AG04450 (cell line): ENCODE measurements at regions of chr3 and their contacts with region 1.

Region 1: DNA sequence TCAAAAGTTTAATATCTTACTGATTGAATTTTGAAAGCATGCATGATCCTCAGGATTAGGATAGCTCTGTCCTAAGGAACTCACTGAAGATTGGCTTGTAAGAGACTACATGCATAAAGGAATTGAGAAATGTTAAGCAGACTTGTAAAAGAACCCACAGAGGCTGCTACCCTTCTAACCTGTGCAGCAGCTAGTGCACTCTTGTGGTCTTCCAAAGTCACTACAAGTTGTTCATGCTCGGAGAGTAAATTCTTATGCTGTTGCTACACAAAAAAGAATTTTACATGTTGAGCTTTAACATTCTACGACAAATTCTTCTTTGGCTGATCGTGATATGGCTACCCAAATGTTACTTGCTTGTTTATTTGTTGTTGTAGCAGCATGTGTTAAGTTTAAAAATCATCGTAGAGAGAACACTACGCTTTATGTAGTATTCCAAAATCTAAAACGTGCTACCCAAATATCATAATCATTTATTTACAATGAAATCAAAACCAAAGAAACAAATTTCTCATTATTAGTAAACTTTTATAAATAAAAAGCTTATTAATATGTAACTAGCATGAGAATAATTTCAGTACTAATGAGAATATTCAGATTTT is 55.0 kb downstream of the GOLIM4 start:
- DNase-seq: peak; percentile 43
- H3K4me3 ChIP-seq: no peak overlapping the region
- H3K27ac ChIP-seq: no peak overlapping the region
- H3K27me3 ChIP-seq: no peaks in the 10 kb centered on the region
- CTCF ChIP-seq: peak; percentile 84

Region 2: GRCh38 chr3:167521006-167521355 is 519.7 kb before region 1 on chr3:
- CTCF ChIA-PET with region 1: no interaction called
- POLR2A ChIA-PET with region 1: no interaction called
- DNase-seq: no peak
- H3K4me3 ChIP-seq: no peak overlapping the region
- H3K27ac ChIP-seq: no peak overlapping the region
- H3K27me3 ChIP-seq: no peaks in the 10 kb centered on the region
- CTCF ChIP-seq: no peak

Region 3: GRCh38 chr3:167882067-167882667 is 158.5 kb before region 1 on chr3:
- CTCF ChIA-PET with region 1: interaction called, 23 read pairs
- POLR2A ChIA-PET with region 1: no interaction called
- DNase-seq: peak; percentile 3
- H3K4me3 ChIP-seq: no peak overlapping the region
- H3K27ac ChIP-seq: no peak overlapping the region
- H3K27me3 ChIP-seq: no peaks in the 10 kb centered on the region
- CTCF ChIP-seq: peak; percentile 70

Region 4: DNA sequence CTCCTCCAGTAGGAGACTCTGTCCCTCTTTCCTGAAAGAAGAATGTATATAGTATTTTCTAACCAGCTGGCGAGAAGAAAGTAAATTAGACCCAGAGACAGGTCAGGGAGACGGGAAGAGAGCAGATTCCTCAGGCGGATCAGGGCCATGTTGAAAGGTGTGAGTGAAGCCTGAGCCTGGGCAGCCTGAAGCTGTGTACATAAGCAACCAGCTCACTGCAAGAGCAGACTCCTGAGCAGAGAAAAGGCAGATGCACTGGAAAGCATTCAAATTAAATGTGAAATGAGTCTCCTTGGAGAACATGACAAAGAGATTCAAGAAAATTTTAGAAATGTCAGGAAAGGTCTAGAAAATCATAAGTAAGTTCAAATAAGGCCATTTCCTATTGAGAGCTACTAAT is 110.7 kb before region 1 on chr3:
- CTCF ChIA-PET with region 1: interaction called, 75 read pairs
- POLR2A ChIA-PET with region 1: no interaction called
- DNase-seq: no peak
- H3K4me3 ChIP-seq: no peak overlapping the region
- H3K27ac ChIP-seq: no peak overlapping the region
- H3K27me3 ChIP-seq: no peaks in the 10 kb centered on the region
- CTCF ChIP-seq: no peak

Region 5: DNA sequence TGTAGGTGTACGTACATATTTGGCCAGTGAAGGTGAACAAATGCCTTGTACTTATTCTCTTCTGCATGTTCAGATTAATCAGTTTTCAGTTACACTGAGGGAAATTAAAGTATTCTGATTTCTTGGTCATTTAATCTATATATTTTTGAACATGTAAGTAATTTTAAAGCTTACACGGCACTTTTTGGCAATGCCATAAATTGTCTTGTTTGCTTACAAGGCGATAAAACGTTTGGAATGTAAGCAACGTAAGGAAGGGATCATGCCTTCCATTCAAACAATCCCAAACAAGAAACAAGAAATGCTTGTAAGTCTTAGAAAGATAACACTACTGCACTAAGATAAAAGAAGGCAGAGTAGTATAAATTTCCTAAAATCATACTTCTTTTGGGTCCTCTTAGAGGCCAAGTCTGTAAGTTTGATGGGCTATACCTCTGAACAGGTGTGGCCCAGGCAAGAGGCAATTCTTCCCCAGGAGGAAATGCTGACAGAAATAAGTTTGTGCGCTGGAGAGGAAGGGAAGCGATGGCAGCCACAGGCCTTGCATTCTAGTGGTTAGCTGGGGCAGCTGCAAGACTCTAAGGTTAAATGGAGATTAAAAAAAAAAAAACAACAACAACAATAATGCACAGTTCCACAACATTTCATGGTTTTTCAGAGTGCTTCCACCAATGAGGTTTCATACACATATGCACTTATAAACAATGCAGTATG is 18.8 kb before region 1 on chr3:
- CTCF ChIA-PET with region 1: interaction called, 16 read pairs
- POLR2A ChIA-PET with region 1: no interaction called
- DNase-seq: no peak
- H3K4me3 ChIP-seq: no peak overlapping the region
- H3K27ac ChIP-seq: no peak overlapping the region
- H3K27me3 ChIP-seq: no peaks in the 10 kb centered on the region
- CTCF ChIP-seq: no peak

Region 6: DNA sequence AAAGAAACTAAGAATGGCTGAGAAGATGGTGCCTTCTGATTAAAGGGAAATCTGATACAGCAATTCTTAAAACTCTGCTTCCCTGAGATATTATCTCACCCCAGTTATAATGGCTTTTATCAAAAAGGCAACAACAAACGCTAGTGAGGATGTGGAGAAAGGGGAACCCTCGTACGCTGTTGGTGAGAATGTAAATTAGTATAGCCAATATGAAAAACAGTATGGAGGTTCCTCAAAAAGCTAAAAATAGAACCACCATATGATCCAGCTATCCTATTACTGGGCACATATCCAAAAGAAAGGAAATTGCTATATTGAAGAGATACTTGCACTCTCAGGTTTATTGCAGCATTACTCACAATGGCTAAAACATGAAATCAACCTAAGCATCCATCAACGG is 10.1 kb before region 1 on chr3:
- CTCF ChIA-PET with region 1: interaction called, 59 read pairs
- POLR2A ChIA-PET with region 1: no interaction called
- DNase-seq: no peak
- H3K4me3 ChIP-seq: no peak overlapping the region
- H3K27ac ChIP-seq: no peak overlapping the region
- H3K27me3 ChIP-seq: no peaks in the 10 kb centered on the region
- CTCF ChIP-seq: no peak